K562 (cell line): ENCODE measurements at regions of chr4 and their contacts with region 1.

Region 1: GRCh38 chr4:173413036-173413435 is 14.1 kb upstream of the SCRG1 start:
- DNase-seq: no peak
- ATAC-seq: no peak
- H3K4me3 ChIP-seq: no peak overlapping the region
- H3K27ac ChIP-seq: no peak overlapping the region
- H3K4me1 ChIP-seq: no peaks in the 10 kb centered on the region
- H3K27me3 ChIP-seq: no peaks in the 10 kb centered on the region
- CTCF ChIP-seq: no peak
- EP300 ChIP-seq: no peak
- POLR2A ChIP-seq: no peak
- RAD21 ChIP-seq: no peak

Region 2: DNA sequence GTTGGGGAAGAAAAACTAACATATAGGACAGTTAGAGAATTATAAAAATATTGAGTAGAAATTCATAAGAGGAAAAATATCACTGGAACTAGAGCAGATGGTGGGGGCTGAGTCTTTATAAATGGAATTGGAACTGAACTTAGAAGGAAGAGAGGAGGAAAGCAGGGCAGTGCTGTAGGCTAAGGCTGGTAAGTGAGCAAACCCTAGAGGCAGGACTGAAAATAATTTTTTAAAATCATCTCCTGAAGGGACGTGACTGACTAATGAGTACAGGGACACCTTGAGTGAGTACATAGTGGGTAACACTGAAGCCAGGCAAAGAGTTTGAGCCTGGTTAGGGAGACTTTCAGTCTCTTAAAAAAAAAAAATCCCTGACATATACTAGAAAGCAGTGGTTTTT is 181.1 kb before region 1 on chr4:
- CTCF ChIA-PET with region 1: no interaction called
- POLR2A ChIA-PET with region 1: no interaction called
- in situ Hi-C with region 1: no loop called
- intact Hi-C with region 1: no loop called
- DNase-seq: peak; percentile 24 to 66 (median 46)
- ATAC-seq: peak; percentile 90
- H3K4me3 ChIP-seq: no peak overlapping the region
- H3K27ac ChIP-seq: peak overlapping the region; percentile 24; the same call in 2 of the 3 replicates
- H3K4me1 ChIP-seq: peaks cover 0 to 24% of the 10 kb centered on the region in 2 experiments; a peak in 3 of 5 replicates
- H3K27me3 ChIP-seq: no peaks in the 10 kb centered on the region
- CTCF ChIP-seq: peak; percentile 49 to 73 (median 61); a peak in 5 of 6 replicates
- EP300 ChIP-seq: no peak
- POLR2A ChIP-seq: no peak
- RAD21 ChIP-seq: peak; percentile 43 to 66; a peak in 3 of 4 replicates

Region 3: DNA sequence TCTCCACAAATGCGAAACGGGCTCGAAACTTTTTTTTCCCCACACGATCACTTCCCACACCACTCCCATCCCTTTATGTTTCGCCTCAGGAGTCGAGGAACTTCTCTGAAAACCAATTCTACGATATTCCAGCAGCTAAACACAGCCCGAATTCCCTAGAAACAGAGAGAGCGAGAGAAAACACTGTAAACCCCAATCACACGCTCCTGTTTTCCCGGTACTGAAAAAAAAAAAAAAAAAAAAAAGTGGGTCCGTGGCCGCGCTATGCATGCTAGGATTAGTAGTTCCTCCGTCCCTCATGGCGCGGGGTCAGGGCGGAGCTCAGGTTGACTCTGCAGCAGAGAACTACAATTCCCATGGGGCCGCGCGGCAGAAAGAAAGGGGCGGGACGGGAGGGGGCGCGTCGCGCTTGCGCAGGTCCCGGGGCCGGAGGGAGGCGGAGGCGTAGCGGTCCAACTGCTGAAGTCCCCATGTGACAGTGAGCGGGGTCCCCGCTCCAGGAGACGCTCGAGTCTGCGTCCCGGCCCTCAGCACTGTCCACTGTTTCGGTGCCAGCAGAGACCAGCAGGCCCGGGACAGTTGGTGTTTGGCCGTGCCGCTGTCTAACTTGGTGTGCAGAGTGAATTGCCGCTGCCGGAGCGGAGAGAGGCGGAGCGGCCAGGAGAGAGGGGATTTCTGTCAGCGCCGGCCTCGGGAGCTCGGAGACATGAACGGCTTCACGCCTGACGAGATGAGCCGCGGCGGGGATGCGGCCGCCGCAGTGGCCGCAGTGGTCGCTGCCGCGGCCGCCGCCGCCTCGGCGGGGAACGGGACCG is 42.4 kb before region 1 on chr4 and contains the start of gene SAP30:
- CTCF ChIA-PET with region 1: no interaction called
- POLR2A ChIA-PET with region 1: interaction called, 3 read pairs
- in situ Hi-C with region 1: no loop called
- intact Hi-C with region 1: loop called (anchors 2 kb)
- DNase-seq: peak; percentile 96 to 98 (median 97)
- ATAC-seq: peak; percentile 89
- H3K4me3 ChIP-seq: peak within 1 kb of the TSS; percentile 81
- H3K27ac ChIP-seq: peak within 1 kb of the TSS; percentile 94
- H3K4me1 ChIP-seq: peaks cover 3 to 6% of the 10 kb centered on the region in 2 experiments; a peak in 3 of 5 replicates
- H3K27me3 ChIP-seq: no peaks in the 10 kb centered on the region
- CTCF ChIP-seq: no peak
- EP300 ChIP-seq: no peak
- POLR2A ChIP-seq: peak; percentile 86
- RAD21 ChIP-seq: no peak
- polyA plus RNA-seq, gene SAP30: 5.9 to 6.9 TPM

Region 4: GRCh38 chr4:174591243-174592021 is 1178.4 kb after region 1 on chr4:
- CTCF ChIA-PET with region 1: no interaction called
- POLR2A ChIA-PET with region 1: no interaction called
- in situ Hi-C with region 1: no loop called
- intact Hi-C with region 1: no loop called
- DNase-seq: no peak
- ATAC-seq: no peak
- H3K4me3 ChIP-seq: no peak overlapping the region
- H3K27ac ChIP-seq: no peak overlapping the region
- H3K4me1 ChIP-seq: peaks cover 0 to 4% of the 10 kb centered on the region in 2 experiments; a peak in 2 of 5 replicates
- H3K27me3 ChIP-seq: no peaks in the 10 kb centered on the region
- CTCF ChIP-seq: no peak
- EP300 ChIP-seq: no peak
- POLR2A ChIP-seq: no peak
- RAD21 ChIP-seq: no peak

Region 5: DNA sequence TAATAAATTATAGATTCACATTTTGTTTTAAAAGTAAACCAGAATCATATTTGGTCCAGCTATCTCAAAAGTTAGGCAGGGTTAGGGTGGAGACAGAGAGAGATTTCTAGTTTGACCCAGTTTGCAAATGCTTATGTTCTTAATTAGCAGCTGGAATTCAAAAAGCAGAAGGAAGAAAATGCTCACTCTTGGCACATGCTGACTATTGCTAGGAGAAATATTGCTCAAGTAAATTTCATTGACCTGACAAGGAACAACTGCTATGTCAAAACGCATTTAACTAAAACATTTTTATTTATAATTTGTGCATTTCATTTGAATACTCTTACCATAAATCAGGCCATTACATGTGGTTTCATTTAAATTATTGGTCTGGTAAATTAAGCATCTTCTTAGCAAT is 1284.2 kb after region 1 on chr4:
- CTCF ChIA-PET with region 1: no interaction called
- POLR2A ChIA-PET with region 1: no interaction called
- in situ Hi-C with region 1: no loop called
- intact Hi-C with region 1: no loop called
- DNase-seq: no peak
- ATAC-seq: 0 out of 3 replicates have a peak, but pooled peaks have one; percentile 31
- H3K4me3 ChIP-seq: no peak overlapping the region
- H3K27ac ChIP-seq: no peak overlapping the region
- H3K4me1 ChIP-seq: no peaks in the 10 kb centered on the region
- H3K27me3 ChIP-seq: no peaks in the 10 kb centered on the region
- CTCF ChIP-seq: no peak
- EP300 ChIP-seq: no peak
- POLR2A ChIP-seq: no peak
- RAD21 ChIP-seq: no peak